Left ventricle myocardium superior (tissue), 1 donor: ENCODE measurements at regions of chrX and their contacts with region 1.

Region 1: DNA sequence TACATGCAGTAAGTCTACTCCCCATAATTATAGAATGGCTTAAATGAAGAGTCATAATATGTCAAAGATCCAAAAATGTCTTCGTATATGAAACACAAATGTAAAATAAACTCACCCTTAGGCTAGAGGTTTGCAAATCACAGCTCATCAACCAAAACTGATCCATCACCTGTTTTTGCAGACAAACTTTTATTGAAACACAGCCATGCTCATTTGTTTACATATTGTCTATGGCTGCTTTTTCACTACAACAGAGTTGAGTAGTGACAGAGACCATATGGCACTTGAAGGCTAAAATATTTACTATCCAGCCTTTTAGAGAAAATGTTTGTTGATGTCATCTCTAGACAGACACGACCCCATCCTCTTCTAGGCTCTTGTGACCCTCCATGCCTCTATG is 64.5 kb upstream of the GEMIN8 start:
- DNase-seq: no peak
- ATAC-seq: no peak

Region 2: DNA sequence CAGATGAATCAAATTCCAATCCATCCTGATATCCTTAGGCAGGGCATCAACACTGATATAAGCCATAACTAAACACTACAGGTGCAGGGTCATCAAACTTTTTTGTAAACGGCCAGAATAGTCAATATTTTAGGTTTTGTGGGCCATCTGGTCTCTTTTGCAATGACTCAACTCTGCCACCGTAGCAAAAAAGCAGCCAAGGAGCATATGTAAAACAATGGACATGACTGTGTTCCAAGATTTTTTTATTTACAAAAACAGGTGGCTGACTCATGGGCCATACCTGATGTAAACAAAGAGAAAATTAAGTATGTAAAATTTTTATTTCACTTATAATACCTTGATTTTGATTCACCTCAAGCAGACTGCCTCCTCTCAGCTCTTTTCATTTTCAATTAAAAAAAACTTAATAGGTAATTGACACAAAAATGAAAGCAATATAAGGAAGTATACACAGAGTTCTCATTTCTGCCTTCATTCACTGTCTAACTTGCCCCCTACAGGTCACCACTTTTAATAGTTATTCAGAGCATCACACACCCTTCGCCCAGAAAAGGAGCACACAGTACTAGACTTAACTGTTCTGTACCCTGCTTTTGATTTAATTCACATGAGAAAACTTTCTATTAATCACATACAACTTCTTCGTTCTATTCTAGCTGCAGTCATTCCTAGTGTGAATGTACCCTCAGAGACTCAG is 242.0 kb before region 1 on chrX:
- intact Hi-C with region 1: no loop called
- DNase-seq: no peak
- ATAC-seq: no peak

Region 3: DNA sequence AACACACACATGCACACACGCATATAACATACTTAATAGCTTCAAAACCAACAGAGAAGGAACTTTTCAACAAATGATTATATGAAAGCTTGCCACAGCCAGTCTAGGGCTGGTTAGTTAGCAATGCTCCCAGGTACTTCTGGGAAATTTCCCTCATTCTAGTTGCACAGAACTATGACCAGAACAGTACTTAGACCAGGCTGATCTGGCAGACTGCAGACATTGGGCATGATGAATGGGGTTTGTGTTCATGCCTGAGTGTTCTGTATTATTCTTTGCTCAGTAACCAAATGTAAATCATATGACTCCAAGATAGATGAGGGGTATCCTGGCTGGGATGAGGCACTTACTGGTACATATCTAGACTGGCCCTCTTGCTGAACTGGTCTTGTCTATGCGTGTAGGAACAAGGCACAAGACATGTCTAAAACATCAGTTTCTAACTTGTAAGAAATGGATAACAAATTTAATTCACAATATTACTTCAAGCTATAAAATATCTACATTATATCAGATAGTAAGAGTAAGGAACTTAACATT is 14.2 kb before region 1 on chrX:
- intact Hi-C with region 1: no loop called
- DNase-seq: no peak
- ATAC-seq: no peak

Region 4: DNA sequence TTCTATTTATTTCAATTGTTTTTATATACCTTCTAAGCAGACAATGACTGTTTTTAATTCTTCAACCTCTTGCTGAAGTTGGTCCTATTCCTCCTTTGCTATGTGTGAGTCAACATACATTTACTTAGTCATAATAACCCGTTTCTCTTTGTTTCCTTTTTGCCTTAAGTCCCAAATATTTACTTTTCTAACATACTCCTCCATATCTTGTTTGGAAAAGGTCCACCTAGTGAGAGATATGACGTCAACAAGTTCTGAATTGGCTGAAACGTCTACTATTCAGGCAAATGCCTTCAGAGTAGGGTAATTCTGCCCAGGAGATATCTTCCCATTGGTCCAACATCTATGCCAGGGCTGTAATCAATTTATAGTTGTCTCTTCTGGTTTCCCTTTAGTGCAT is 114.8 kb after region 1 on chrX:
- intact Hi-C with region 1: loop called (anchors 5 kb)
- DNase-seq: no peak
- ATAC-seq: no peak